H1 (cell line): ENCODE measurements at regions of chr2 and their contacts with region 1.

Region 1: GRCh38 chr2:120879431-120880295 is 144.0 kb downstream of the GLI2 start:
- DNase-seq: no peak
- H3K4me3 ChIP-seq: no peak overlapping the region
- H3K27ac ChIP-seq: no peak overlapping the region
- H3K4me1 ChIP-seq: peaks cover 0 to 9% (median 6%) of the 10 kb centered on the region in 4 experiments; a peak in 5 of 7 replicates
- H3K27me3 ChIP-seq: no peaks in the 10 kb centered on the region
- CTCF ChIP-seq: peak in 1 of 3 experiments; percentile 17; a peak in 1 of 4 replicates
- EP300 ChIP-seq: no peak
- POLR2A ChIP-seq: no peak
- RAD21 ChIP-seq: no peak

Region 2: GRCh38 chr2:120465989-120466703 is 413.5 kb before region 1 on chr2:
- CTCF ChIA-PET with region 1: no interaction called
- POLR2A ChIA-PET with region 1: no interaction called
- DNase-seq: peak; percentile 84 to 89
- H3K4me3 ChIP-seq: peak overlapping the region in 2 of 4 experiments; percentile 14 to 30; a peak in 3 of 8 replicates
- H3K27ac ChIP-seq: no peak overlapping the region
- H3K4me1 ChIP-seq: peaks cover 5 to 13% (median 8%) of the 10 kb centered on the region in 4 experiments
- H3K27me3 ChIP-seq: peaks cover 90 to 98% (median 95%) of the 10 kb centered on the region in 4 experiments
- CTCF ChIP-seq: no peak
- EP300 ChIP-seq: peak in 1 of 2 experiments; percentile 60; a peak in 1 of 3 replicates
- POLR2A ChIP-seq: no peak
- RAD21 ChIP-seq: no peak

Region 3: GRCh38 chr2:120703330-120703994 is 176.2 kb before region 1 on chr2:
- CTCF ChIA-PET with region 1: interaction called, 11 read pairs
- POLR2A ChIA-PET with region 1: no interaction called
- DNase-seq: no peak
- H3K4me3 ChIP-seq: no peak overlapping the region
- H3K27ac ChIP-seq: no peak overlapping the region
- H3K4me1 ChIP-seq: peaks cover 2 to 22% (median 8%) of the 10 kb centered on the region in 4 experiments
- H3K27me3 ChIP-seq: peaks cover 0 to 11% (median 6%) of the 10 kb centered on the region in 4 experiments; a peak in 3 of 7 replicates
- CTCF ChIP-seq: no peak
- EP300 ChIP-seq: no peak
- POLR2A ChIP-seq: no peak
- RAD21 ChIP-seq: no peak

Region 4: DNA sequence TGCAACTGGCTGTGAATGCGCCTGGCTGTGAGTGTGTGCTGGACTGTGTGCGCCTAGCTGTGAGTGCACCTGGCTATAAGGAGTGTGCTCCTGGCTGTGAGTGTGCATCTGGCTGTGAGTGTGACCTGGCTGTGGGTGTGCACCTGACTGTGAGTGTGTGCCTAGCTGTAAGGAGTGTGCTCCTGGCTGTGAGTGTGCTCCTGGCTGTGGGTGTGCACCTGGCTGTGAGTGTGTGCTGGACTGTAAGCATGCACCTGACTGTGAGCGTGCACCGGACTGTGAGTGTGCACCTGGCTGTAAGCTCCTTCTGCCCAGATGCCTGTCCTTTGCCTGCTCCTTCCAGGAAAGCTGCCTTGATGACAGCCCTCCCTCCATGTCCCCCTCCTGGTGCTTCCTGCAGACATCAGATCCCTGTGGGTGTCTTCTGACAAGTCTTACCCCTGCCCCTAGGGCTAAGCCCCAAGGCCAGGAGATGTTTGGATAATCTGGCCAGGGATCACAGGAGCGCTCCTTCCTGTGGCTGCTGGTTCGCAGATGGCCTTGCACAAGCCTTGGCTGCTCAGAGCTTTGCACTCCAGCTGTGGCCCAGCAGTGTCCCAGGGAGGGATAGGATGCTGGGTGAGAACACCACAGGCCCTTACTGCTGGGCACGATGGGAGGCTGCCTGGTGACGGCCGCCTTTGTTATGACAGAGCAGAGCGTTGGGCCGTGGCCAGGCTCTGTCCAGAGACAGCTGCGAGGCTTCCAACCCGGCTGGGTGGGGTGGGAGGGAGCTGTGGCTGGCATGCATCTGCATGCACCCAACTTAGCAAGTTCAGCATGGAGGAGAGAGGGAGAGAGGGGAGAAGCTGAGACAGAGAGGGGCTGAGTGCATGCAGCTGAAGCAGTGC is 54.0 kb before region 1 on chr2:
- CTCF ChIA-PET with region 1: interaction called, 32 read pairs
- POLR2A ChIA-PET with region 1: no interaction called
- DNase-seq: no peak
- H3K4me3 ChIP-seq: no peak overlapping the region
- H3K27ac ChIP-seq: no peak overlapping the region
- H3K4me1 ChIP-seq: peaks cover 0 to 28% (median 15%) of the 10 kb centered on the region in 4 experiments; a peak in 6 of 7 replicates
- H3K27me3 ChIP-seq: no peaks in the 10 kb centered on the region
- CTCF ChIP-seq: no peak
- EP300 ChIP-seq: no peak
- POLR2A ChIP-seq: no peak
- RAD21 ChIP-seq: no peak

Region 5: GRCh38 chr2:120867290-120868241 is 12.1 kb before region 1 on chr2:
- CTCF ChIA-PET with region 1: interaction called, 158 read pairs
- POLR2A ChIA-PET with region 1: interaction called, 5 read pairs
- DNase-seq: peak in 1 of 2 experiments; percentile 78
- H3K4me3 ChIP-seq: peak overlapping the region in 2 of 4 experiments; percentile 6 to 42; a peak in 4 of 8 replicates
- H3K27ac ChIP-seq: no peak overlapping the region
- H3K4me1 ChIP-seq: peaks cover 9 to 40% (median 18%) of the 10 kb centered on the region in 4 experiments
- H3K27me3 ChIP-seq: peaks cover 0 to 4% (median 0%) of the 10 kb centered on the region in 4 experiments; a peak in 1 of 7 replicates
- CTCF ChIP-seq: no peak
- EP300 ChIP-seq: no peak
- POLR2A ChIP-seq: no peak
- RAD21 ChIP-seq: no peak

Region 6: GRCh38 chr2:120892967-120893667 is 13.5 kb after region 1 on chr2:
- CTCF ChIA-PET with region 1: interaction called, 65 read pairs
- POLR2A ChIA-PET with region 1: interaction called, 4 read pairs
- DNase-seq: no peak
- H3K4me3 ChIP-seq: peak overlapping the region in 3 of 4 experiments; percentile 23 to 44 (median 27); a peak in 4 of 8 replicates
- H3K27ac ChIP-seq: no peak overlapping the region; the same call in 1 of the 2 replicates
- H3K4me1 ChIP-seq: peaks cover 6 to 23% (median 14%) of the 10 kb centered on the region in 4 experiments; a peak in 6 of 7 replicates
- H3K27me3 ChIP-seq: no peaks in the 10 kb centered on the region; a peak in 1 of 7 replicates
- CTCF ChIP-seq: no peak
- EP300 ChIP-seq: no peak
- POLR2A ChIP-seq: no peak
- RAD21 ChIP-seq: no peak

Region 7: DNA sequence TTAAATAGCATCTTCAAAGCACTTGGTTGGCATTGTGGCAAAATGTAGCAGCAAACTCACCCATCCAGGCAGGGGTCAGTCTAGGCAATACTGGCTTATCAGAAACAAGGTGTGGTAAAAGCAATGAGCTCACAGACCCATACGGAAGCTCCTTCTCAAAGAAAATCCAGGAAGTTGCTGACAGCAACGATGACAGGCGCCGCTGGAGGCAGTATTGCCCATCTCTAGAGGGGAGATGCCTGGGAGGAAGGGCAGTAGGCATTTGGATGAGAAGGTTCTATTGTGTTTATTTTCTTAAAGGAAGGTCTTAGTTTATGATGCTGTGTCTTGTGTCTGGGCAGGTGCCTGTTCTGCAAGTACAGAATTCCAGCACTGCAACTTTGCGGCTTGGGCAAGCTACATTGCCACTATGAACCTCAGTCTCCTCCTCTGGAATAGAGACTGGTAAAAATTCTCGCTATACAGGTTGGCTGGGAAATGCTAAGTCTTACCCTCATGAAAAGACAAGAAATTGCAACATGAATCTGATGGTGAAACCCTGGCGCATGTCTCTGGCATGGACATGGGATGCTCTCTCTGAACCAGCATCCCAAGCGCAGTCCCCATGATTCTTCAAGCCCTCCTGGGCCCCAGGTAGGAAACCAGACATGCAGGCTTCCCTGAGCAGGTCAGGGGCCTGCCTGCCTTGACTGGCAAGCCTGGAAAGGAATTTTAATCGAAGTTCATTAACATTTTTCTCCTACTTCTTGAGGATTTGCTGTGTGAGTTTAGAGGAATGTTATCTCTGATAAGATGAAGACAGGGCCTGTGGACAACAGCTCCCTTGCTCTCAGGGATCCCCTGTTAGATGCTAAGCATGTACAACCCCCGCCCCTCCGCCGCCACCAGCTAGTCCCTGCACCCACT is 249.3 kb after region 1 on chr2:
- CTCF ChIA-PET with region 1: no interaction called
- POLR2A ChIA-PET with region 1: no interaction called
- DNase-seq: peak in 1 of 2 experiments; percentile 78
- H3K4me3 ChIP-seq: no peak overlapping the region
- H3K27ac ChIP-seq: no peak overlapping the region
- H3K4me1 ChIP-seq: peaks cover 3 to 26% (median 13%) of the 10 kb centered on the region in 4 experiments
- H3K27me3 ChIP-seq: peaks cover 0 to 6% (median under 1%) of the 10 kb centered on the region in 4 experiments; a peak in 2 of 7 replicates
- CTCF ChIP-seq: peak; percentile 75 to 95 (median 80)
- EP300 ChIP-seq: no peak
- POLR2A ChIP-seq: no peak
- RAD21 ChIP-seq: peak; percentile 82 to 86